ENCODE measurements at regions of chr5 and their contacts with region 1.

Region 1: GRCh38 chr5:149114403-149115312 is 26.6 kb upstream of the ABLIM3 start:
- DNase-seq: peak; percentile 54
- ATAC-seq: peak; percentile 86
- H3K4me3 Mint-ChIP-seq: no peak overlapping the region
- H3K27ac Mint-ChIP-seq: no peak overlapping the region
- H3K4me1 Mint-ChIP-seq: no peaks in the 10 kb centered on the region
- H3K27me3 Mint-ChIP-seq: peaks cover 15% of the 10 kb centered on the region

Region 2: DNA sequence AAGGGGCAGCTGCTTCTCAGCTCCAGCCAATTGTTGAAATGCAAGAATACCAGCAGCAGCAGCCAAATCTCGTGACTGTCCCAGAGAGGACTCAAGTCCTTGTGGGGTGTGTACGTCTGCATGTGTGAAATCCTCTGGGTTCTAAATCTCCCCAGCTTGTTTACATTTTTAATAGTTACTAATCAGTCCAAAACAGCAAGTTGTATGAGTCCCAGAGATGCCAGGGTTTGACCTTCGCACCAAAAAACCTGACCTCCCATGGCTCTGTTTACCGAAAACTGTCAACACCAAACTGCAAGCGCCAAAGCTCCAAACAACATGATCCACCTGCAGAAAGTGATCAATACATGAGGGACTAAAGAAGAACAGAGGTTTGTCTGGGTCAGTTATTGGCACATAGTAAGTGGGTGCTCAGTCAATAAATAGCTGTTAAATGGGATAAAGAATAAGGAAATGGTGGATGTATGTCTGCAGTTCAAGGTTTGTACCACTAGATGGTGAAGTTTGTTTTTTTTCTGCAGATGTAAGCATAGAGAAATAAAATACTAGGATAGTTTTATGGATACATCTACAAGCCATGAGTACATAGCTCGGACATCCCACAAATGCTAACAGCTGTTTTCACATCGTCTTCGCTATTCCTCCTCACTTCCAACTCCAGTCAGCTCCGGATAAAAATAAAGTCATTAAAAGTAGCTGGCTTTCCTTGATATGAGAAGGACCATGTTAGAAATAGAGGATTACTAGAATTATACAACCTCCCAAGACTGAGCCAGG is 373.5 kb before region 1 on chr5:
- CTCF ChIA-PET with region 1: interaction called, 18 read pairs
- POLR2A ChIA-PET with region 1: no interaction called
- DNase-seq: no peak
- ATAC-seq: no peak
- H3K4me3 Mint-ChIP-seq: no peak overlapping the region
- H3K27ac Mint-ChIP-seq: no peak overlapping the region
- H3K4me1 Mint-ChIP-seq: peaks cover 2% of the 10 kb centered on the region
- H3K27me3 Mint-ChIP-seq: peaks cover 19% of the 10 kb centered on the region

Region 3: DNA sequence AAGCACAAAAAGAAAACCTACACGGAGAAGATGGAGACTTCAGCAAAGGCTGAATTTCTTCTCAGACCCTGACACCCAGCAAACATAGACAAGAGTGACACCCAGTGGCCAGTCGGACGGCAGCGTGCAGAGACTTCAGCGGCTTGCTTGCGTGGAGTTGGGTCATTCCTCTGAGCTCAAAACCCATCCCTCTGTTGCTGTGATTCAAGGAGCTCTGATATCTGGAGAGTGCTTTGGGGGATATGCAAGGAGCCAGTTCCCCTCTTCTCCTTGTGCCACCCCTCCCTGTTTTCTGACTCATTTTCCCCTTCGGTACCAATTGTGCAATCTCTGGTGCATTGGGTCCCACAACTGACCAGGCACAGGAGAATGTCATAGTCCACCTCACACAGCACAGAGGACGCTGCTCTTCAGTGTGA is 79.3 kb before region 1 on chr5:
- CTCF ChIA-PET with region 1: interaction called, 18 read pairs
- POLR2A ChIA-PET with region 1: no interaction called
- DNase-seq: peak; percentile 79
- ATAC-seq: peak; percentile 89
- H3K4me3 Mint-ChIP-seq: no peak overlapping the region
- H3K27ac Mint-ChIP-seq: no peak overlapping the region
- H3K4me1 Mint-ChIP-seq: peaks cover 30% of the 10 kb centered on the region
- H3K27me3 Mint-ChIP-seq: peaks cover 6% of the 10 kb centered on the region

Region 4: DNA sequence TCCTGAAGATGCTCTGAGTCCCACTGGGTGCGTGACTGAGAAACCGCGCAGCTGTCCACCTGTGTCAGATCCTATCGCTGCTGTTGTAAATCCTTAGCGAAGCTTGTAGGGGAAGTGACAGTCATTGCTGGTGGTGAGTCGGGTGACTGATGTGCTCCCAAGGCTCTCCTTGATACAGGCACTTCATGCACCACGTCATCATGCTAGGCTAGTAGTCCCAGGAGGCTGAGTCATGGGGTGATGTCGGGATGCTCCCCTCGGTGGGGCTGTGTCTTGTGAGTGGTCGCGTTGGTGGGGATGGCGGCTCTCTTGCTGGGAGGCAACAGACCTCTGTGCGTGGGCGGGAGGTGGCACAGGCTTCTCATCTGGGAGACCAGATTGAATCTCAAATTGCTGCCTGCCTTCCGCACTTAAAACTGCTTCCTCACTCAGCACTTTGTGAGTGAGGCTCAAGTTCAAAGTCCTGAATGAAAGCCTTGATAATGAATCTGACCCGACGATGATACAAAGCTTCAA is 351.9 kb after region 1 on chr5:
- CTCF ChIA-PET with region 1: no interaction called
- POLR2A ChIA-PET with region 1: no interaction called
- DNase-seq: no peak
- ATAC-seq: no peak
- H3K4me3 Mint-ChIP-seq: no peak overlapping the region
- H3K27ac Mint-ChIP-seq: no peak overlapping the region
- H3K4me1 Mint-ChIP-seq: no peaks in the 10 kb centered on the region
- H3K27me3 Mint-ChIP-seq: no peaks in the 10 kb centered on the region